PC-3 (cell line): ENCODE measurements at regions of chr14 and their contacts with region 1.

Region 1: DNA sequence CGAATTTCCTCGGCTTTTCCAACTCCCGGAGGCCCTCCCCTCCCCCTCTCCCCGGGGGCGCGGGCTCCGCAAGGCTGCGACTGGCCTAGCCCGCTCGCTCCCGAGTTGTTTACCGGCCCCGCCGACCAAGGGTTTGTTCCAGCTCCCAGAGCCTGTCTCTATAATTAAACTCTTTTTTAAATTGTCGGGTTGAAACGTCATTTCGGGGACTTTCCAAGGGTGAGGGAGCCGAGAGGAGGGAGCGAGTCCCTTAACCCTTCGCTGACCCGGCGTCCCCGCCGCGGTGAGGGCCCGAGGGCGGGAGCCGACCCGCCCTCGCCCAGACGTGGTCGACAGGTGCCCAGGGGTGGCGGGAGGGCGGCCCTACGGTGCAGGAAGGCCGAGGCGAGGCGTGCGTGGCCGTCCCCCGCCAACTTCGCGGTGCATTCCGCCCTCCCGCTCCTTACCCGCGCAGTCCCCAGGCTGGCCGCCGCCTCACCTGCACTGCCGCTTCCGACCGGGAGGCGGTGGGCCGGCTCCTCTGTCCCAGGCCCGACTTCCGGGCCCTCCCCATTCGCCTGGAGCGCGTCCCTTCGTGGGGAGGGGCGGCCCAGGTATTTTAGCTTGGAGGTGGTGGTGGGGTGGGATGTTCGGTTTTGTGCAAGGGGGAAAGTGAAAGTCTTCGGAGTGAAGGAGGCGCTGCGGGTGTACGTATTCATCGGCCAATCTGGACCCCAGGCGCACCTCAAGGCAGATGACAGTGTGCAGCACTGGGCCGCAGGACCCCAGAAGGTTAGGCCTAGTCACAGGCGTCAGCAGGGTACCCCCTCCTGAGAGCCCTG is 2.9 kb upstream of the ZFP36L1 start:
- DNase-seq: peak; percentile 84
- ATAC-seq: peak; percentile 55
- H3K4me3 ChIP-seq: peak overlapping the region; percentile 90
- H3K27ac ChIP-seq: peak overlapping the region; percentile 97
- H3K4me1 ChIP-seq: peaks cover 19% of the 10 kb centered on the region
- H3K27me3 ChIP-seq: no peaks in the 10 kb centered on the region
- CTCF ChIP-seq: peak; percentile 66

Region 2: GRCh38 chr14:67919259-67920032 is 876.4 kb before region 1 on chr14:
- CTCF ChIA-PET with region 1: no interaction called
- POLR2A ChIA-PET with region 1: interaction called, 10 read pairs
- intact Hi-C with region 1: no loop called
- DNase-seq: no peak
- ATAC-seq: no peak
- H3K4me3 ChIP-seq: no peak overlapping the region
- H3K27ac ChIP-seq: no peak overlapping the region
- H3K4me1 ChIP-seq: no peaks in the 10 kb centered on the region
- H3K27me3 ChIP-seq: no peaks in the 10 kb centered on the region
- CTCF ChIP-seq: no peak

Region 3: DNA sequence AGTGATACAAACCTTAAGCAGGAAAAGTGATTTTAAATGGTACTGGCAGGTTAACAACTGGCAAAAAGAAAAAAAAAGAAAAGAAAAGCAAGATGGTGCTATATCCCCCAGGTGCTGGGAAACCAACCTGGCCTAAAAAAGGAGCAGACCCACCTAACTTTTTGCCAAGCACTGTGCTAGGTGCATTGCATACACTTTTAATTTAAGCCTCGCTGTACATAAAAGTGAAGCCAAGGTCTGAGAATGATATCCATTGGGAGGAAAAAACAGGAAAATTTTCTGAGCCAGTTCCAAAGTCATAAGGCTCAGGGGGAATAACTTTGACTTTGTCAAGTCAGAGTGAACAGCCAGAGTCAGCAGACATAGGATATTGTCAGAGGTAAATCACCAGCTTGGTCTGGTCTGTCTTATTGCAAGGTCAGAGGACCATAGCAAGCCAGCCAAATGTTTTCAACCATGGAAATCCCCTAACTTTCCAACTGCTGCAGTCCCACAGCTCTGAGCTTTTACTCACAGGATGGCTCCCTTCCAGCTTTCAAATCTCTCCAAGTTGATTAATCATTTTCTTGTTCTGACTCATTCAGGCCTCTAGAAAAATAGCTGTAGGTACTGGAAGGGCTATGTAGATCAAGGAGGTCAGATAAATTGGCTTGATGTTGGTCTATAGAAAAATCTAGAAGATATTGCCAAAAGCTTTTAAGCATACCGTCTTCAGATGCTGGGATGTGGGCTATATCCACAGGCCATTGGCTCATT is 563.3 kb before region 1 on chr14:
- CTCF ChIA-PET with region 1: no interaction called
- POLR2A ChIA-PET with region 1: no interaction called
- intact Hi-C with region 1: loop called (anchors 5 kb)
- DNase-seq: peak; percentile 99
- ATAC-seq: peak; percentile 87
- H3K4me3 ChIP-seq: peak overlapping the region; percentile 44
- H3K27ac ChIP-seq: peak overlapping the region; percentile 97
- H3K4me1 ChIP-seq: peaks cover 53% of the 10 kb centered on the region
- H3K27me3 ChIP-seq: no peaks in the 10 kb centered on the region
- CTCF ChIP-seq: no peak

Region 4: GRCh38 chr14:68449561-68450295 is 346.1 kb before region 1 on chr14:
- CTCF ChIA-PET with region 1: no interaction called
- POLR2A ChIA-PET with region 1: interaction called, 39 read pairs
- intact Hi-C with region 1: no loop called
- DNase-seq: no peak
- ATAC-seq: no peak
- H3K4me3 ChIP-seq: no peak overlapping the region
- H3K27ac ChIP-seq: no peak overlapping the region
- H3K4me1 ChIP-seq: peaks cover 24% of the 10 kb centered on the region
- H3K27me3 ChIP-seq: no peaks in the 10 kb centered on the region
- CTCF ChIP-seq: no peak

Region 5: DNA sequence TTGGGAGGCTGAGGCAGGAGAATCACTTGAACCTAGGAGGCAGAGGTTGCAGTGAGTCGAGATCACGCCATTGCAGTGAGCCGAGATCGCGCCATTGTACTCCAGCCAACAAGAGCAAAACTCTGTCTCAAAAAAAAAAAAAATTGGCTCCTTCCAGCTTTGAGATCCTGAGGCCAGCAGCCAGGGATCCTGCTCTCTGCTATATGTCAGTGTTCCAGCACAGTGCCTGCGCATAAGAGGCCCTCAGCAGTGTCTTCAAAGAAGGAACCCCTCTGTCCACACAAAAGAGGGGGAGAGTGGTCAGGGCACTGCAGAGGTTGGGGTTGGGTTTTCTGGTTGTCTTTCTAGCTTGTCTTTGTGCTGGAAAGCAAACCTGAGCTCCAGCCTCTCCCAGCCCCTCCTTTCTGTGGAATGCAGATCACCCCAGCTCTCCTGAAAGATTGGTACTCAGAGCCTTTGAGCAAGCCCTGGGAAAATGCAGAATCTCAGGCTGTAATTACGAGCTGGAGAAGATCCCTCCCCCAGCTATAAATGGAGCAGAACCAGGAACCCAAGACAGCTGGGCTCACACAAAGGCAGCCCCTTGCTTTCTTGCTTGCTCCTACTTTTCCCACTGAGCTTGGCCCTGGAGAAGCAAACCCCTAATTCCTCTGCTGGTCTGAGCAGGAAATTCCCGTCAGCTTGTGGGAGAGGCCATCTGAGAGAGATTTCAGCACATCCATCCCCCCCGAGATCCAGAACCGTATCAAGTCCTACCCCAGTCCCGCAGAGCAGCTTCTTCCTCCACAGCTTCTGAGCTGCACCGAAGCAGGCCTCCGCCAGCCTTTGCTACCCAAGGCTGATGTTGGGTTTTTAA is 208.7 kb before region 1 on chr14:
- CTCF ChIA-PET with region 1: no interaction called
- POLR2A ChIA-PET with region 1: interaction called, 10 read pairs
- intact Hi-C with region 1: no loop called
- DNase-seq: peak; percentile 14
- ATAC-seq: peak; percentile 76
- H3K4me3 ChIP-seq: no peak overlapping the region
- H3K27ac ChIP-seq: no peak overlapping the region
- H3K4me1 ChIP-seq: peaks cover 5% of the 10 kb centered on the region
- H3K27me3 ChIP-seq: no peaks in the 10 kb centered on the region
- CTCF ChIP-seq: no peak

Region 6: GRCh38 chr14:68780358-68781160 is 15.2 kb before region 1 on chr14:
- CTCF ChIA-PET with region 1: interaction called, 6 read pairs
- POLR2A ChIA-PET with region 1: interaction called, 13 read pairs
- intact Hi-C with region 1: no loop called
- DNase-seq: peak; percentile 43
- ATAC-seq: peak; percentile 20
- H3K4me3 ChIP-seq: peak overlapping the region; percentile 32
- H3K27ac ChIP-seq: peak overlapping the region; percentile 80
- H3K4me1 ChIP-seq: peaks cover 60% of the 10 kb centered on the region
- H3K27me3 ChIP-seq: no peaks in the 10 kb centered on the region
- CTCF ChIP-seq: no peak

Region 7: GRCh38 chr14:68884031-68885030 is 88.5 kb after region 1 on chr14:
- CTCF ChIA-PET with region 1: no interaction called
- POLR2A ChIA-PET with region 1: interaction called, 27 read pairs
- intact Hi-C with region 1: no loop called
- DNase-seq: peak; percentile 97
- ATAC-seq: peak; percentile 95
- H3K4me3 ChIP-seq: no peak overlapping the region
- H3K27ac ChIP-seq: peak overlapping the region; percentile 94
- H3K4me1 ChIP-seq: peaks cover 25% of the 10 kb centered on the region
- H3K27me3 ChIP-seq: no peaks in the 10 kb centered on the region
- CTCF ChIP-seq: no peak

Region 8: GRCh38 chr14:69535230-69535848 is 739.5 kb after region 1 on chr14:
- CTCF ChIA-PET with region 1: no interaction called
- POLR2A ChIA-PET with region 1: no interaction called
- intact Hi-C with region 1: no loop called
- DNase-seq: peak; percentile 71
- ATAC-seq: peak; percentile 79
- H3K4me3 ChIP-seq: no peak overlapping the region
- H3K27ac ChIP-seq: no peak overlapping the region
- H3K4me1 ChIP-seq: peaks cover 25% of the 10 kb centered on the region
- H3K27me3 ChIP-seq: peaks cover 4% of the 10 kb centered on the region; the same call in 1 of the 2 replicates
- CTCF ChIP-seq: peak; percentile 91